Breast epithelium (tissue), 4 donors: ENCODE measurements at regions of chr2 and their contacts with region 1.

Region 1: GRCh38 chr2:9174771-9175437 is 31.7 kb upstream of the ASAP2 start:
- DNase-seq: no peak
- H3K4me3 ChIP-seq: no peak overlapping the region
- H3K27ac ChIP-seq: no peak overlapping the region
- H3K4me1 ChIP-seq: peaks cover 0 to 4% of the 10 kb centered on the region in 2 donors
- H3K27me3 ChIP-seq: no peaks in the 10 kb centered on the region
- CTCF ChIP-seq: no peak
- POLR2A ChIP-seq: no peak

Region 2: DNA sequence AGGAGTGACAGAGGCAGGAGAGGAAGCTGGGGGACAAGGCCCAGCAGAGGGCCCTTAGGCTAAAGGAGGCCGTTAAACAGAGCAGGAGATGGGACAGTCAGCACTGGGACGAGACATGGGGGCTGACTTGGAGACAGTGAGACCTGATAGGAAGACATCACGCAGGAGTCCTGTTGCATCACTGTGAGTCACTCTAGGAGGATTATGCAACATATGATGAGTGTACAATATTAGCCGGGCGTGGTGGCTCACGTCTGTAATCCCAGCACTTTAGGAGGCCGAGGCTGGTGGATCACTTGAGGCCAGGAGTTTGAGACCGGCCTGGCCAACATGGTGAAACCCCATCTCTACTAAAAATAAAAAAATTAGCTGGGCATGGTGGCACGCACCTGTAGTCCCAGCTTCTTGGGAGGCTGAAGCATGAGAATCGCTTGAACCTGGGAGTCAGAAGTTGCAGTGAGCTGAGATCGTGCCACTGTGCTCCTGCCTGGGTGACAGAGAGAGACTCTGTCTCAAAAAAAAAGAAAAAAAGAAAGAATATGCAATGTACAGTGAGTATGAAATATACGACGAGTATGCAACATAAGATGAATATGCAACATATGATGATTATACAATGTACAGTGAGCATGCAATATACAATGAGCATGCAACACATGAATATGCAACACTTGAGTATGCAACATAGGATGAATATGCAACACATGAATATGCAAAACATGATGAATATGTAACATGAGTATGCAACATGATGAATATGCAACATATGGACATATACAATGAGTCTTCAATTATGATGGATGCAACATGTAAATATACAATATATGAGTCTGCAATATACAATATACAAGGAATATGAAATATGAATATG is 576.4 kb before region 1 on chr2:
- intact Hi-C with region 1: no loop called
- DNase-seq: no peak
- H3K4me3 ChIP-seq: no peak overlapping the region
- H3K27ac ChIP-seq: no peak overlapping the region
- H3K4me1 ChIP-seq: no peaks in the 10 kb centered on the region
- H3K27me3 ChIP-seq: no peaks in the 10 kb centered on the region
- CTCF ChIP-seq: no peak
- POLR2A ChIP-seq: no peak

Region 3: DNA sequence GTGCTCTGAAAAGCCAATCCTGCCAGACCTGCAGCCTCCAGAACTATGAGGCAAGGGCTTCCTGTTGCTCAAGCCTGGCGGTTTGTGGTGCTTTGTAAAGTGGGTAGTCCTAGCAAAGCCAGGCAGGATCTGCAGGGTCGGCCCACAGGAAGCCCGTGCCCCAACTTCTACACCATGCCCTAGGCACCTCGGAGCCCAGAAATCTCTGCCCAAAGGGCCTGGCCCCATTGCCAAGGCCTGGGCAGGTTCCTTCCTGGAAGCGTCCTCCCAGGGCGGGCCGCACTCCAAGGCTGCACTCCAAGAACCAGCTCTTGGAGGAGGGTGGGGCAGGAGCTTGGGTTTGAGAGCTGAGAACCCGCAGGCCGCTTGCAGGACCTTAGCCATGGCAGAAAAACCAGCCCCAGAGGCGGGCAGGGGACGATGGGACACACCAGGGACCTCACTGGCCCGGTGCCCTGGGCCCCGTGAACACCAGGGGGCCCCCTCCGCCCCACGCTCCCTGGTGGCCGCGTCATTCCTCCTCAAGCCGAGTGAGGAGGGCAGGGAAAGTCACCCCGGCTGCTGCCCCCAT is 530.2 kb before region 1 on chr2:
- intact Hi-C with region 1: no loop called
- DNase-seq: no peak
- H3K4me3 ChIP-seq: no peak overlapping the region
- H3K27ac ChIP-seq: no peak overlapping the region
- H3K4me1 ChIP-seq: no peaks in the 10 kb centered on the region
- H3K27me3 ChIP-seq: no peaks in the 10 kb centered on the region
- CTCF ChIP-seq: no peak
- POLR2A ChIP-seq: no peak

Region 4: DNA sequence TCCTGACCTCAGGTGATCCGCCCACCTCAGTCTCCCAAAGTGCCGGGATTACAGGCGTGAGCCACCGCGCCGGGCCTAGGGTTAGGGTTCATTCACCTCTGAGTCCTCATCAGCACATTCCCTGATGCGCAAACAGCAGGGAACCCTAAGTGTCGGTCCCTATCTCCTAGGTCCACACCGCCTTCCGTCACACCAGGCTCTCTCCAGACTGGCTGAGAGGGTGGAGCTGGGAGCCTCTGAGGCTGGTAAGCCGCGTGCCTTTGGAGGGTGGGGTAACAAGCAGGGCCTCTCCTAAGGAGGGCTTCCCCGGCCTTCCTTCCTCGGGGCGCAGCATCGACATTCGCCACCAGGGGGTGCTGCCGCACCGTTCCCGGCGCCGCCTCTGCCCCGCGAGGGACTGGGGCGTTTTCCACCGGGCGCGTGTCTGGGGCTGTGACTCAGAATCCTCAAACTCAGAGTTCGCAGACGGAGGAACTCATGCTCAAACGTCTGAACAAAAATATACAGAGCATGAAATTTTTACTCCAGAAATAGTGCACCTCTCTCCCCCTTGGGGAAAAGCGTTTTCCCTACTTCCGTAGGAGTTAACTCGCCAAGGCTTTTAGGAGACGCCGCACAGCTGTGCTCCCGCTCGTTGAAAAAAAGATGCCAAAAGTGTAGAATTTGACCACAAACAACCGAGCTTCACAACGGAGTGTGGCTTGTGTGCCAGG is 32.2 kb before region 1 on chr2:
- intact Hi-C with region 1: no loop called
- DNase-seq: peak; percentile 63 to 80
- H3K4me3 ChIP-seq: peak overlapping the region in 2 of 3 donors; percentile 12 to 56
- H3K27ac ChIP-seq: peak overlapping the region in 1 of 2 donors; percentile 17
- H3K4me1 ChIP-seq: peaks cover 4% of the 10 kb centered on the region in 2 donors
- H3K27me3 ChIP-seq: no peaks in the 10 kb centered on the region
- CTCF ChIP-seq: peak; percentile 97 to 98 (median 97)
- POLR2A ChIP-seq: no peak

Region 5: GRCh38 chr2:10360851-10361588 is 1186.1 kb after region 1 on chr2:
- intact Hi-C with region 1: loop called (anchors 5 kb)
- DNase-seq: no peak
- H3K4me3 ChIP-seq: no peak overlapping the region
- H3K27ac ChIP-seq: no peak overlapping the region
- H3K4me1 ChIP-seq: no peaks in the 10 kb centered on the region
- H3K27me3 ChIP-seq: no peaks in the 10 kb centered on the region
- CTCF ChIP-seq: no peak
- POLR2A ChIP-seq: no peak